AG04449 (cell line): ENCODE measurements at regions of chr4 and their contacts with region 1.

Region 1: GRCh38 chr4:137819964-137820383 is 287.7 kb upstream of the PCDH18 start:
- DNase-seq: no peak
- H3K4me3 ChIP-seq: no peak overlapping the region
- CTCF ChIP-seq: peak; percentile 50

Region 2: GRCh38 chr4:137722910-137723309 is 97.1 kb before region 1 on chr4:
- CTCF ChIA-PET with region 1: no interaction called
- POLR2A ChIA-PET with region 1: no interaction called
- DNase-seq: no peak
- H3K4me3 ChIP-seq: no peak overlapping the region
- CTCF ChIP-seq: no peak

Region 3: DNA sequence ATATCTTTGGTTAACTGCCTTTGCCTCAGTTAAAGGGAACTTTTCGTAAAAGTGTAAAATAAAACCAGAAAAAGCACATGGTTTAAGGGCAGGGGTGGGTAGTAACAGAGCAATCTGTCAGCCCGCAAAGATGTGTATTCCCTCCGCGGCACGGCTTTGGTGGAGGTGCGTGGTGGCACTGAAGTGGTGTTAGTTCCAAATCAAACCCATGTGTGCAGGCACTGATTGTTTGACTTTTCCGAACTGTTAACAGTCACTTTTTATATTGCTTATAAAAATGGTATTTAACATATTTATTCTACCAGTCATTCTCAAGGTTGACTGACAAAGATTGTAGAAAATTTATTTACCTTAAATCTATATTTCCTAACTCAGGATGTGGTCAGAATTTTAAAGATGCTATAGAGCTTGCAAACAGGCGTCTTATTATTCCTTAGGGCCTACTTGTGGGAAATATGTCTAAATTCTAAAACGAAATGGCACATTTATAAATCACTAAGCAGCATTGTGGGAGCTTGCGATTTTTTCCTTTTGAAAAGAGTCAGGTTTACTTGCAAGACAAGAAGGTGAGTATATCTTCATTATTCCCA is 15.0 kb before region 1 on chr4:
- CTCF ChIA-PET with region 1: interaction called, 19 read pairs
- POLR2A ChIA-PET with region 1: no interaction called
- DNase-seq: no peak
- H3K4me3 ChIP-seq: no peak overlapping the region
- CTCF ChIP-seq: no peak